PC-3 (cell line): ENCODE measurements at regions of chr15 and their contacts with region 1.

Region 1: DNA sequence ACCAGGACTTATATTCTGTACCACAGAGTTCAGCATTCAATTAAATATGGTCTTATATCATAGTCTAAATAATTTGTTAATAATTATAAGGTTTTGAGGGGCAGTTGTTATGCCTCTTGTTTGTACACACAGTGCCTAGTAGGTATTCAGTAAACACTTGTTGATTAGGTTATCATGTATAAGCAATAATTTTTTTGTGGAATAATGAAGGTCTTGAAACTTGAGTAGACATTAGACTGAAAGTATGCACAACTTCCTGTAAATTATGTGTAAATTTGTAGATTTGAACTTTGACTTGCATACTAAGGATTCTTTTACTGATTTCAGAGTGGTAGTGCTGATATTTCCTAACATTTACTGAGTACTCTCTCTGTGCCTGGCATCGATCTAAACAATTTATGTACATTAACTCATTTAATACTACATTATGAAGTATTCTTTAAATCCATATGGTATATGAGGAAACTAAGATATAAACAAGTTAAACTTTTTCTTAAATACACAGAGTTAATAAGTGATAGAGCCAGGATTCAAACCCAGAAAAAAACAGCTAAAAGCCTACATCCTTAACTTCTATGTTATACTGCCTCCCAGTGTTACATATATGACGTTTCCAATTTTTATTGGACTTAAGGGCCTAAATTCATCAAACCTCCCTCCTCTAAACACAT is 65.1 kb downstream of the GLCE start:
- DNase-seq: peak; percentile 52
- ATAC-seq: peak; percentile 40; the same call in 1 of the 2 replicates
- H3K4me3 ChIP-seq: no peak overlapping the region
- H3K27ac ChIP-seq: no peak overlapping the region
- H3K4me1 ChIP-seq: peaks cover 4% of the 10 kb centered on the region; the same call in 1 of the 2 replicates
- H3K27me3 ChIP-seq: no peaks in the 10 kb centered on the region
- CTCF ChIP-seq: peak; percentile 58

Region 2: DNA sequence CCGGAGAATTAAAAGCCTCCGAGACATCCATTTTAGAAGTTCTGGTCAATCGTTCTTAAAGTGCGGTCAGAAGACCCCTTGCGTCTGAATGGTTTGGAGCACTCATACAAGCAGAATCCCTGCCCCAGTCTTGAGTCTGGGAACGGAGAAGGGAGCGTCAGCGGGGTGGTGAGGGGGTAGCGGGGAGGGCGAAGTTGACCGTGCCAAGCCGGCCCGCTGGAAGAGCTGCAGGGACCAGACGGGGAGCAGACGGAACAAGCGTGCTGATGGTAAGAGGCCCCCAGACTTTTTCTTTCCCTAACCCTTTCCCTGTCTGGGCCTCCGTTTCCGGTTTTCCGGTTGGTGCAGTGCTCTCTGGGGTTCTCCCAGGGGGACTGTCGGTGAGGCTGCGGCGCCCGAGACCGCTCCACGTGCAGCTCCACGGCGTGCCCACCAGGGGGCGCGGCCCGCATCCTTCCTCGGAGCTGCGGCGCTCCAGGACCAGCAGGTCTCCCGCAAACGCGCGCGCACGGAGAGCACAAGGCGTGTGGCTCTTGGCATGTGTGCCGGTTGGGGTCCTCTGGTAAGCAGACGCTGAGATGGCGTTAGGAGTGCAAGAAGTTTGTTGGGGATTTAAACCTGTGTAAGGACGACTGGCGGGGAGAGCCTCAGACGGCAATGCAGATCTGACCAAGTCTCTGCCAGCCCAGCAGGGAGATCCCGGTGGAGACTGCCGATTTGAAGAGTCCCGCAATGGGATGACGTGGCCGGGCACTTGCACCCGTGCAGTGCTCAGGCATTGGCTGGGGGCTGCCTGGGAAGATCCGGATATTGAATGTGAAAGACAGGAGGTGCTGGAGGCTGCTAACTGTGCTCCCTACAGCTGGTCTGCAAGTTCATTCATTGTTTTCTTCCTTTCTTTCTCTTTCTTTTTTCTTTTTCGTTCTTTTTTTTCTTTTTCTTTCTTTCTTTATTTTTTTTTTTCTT is 665.9 kb before region 1 on chr15:
- CTCF ChIA-PET with region 1: interaction called, 15 read pairs
- POLR2A ChIA-PET with region 1: no interaction called
- intact Hi-C with region 1: no loop called
- DNase-seq: peak; percentile 72
- ATAC-seq: peak; percentile 93
- H3K4me3 ChIP-seq: peak overlapping the region; percentile 70
- H3K27ac ChIP-seq: no peak overlapping the region
- H3K4me1 ChIP-seq: no peaks in the 10 kb centered on the region
- H3K27me3 ChIP-seq: no peaks in the 10 kb centered on the region
- CTCF ChIP-seq: peak; percentile 91

Region 3: DNA sequence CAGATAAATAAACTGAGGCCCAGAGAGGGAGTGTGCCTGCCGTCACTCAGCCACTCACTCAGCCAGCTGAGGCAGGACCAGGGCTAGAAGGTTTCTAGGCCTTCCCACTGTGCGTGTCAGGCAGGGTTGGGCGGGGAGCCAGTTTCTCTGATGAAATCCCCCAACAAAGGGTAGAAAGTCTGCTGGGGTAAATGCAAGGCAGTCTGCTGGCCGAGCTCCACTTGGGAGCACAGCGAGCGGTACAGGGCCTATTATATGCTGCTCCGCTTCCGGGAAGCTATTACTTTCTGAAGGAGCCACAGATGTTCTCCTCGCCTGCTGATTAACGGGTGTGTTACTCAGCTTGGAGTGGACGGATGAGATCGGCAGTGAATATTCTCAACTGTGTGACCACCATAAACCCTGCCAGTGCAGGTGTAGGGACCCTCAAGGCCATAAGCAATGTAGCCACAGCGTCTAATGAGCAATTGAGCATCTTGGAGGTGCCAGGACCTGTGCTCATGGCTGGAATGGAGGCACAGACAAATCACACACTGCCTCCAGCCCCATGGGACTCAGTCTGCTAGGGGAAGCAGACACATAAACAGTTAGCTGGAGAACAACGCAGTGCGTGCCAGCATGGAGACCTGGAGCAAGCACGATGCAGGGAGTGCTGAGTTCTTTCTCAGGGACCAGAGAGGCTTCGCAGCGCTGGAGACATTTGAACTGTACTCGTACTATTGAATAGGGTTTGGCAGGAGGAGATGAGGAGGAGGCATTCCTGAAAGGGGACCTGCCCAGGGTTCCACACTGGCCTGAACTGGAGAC is 604.6 kb before region 1 on chr15:
- CTCF ChIA-PET with region 1: no interaction called
- POLR2A ChIA-PET with region 1: no interaction called
- intact Hi-C with region 1: no loop called
- DNase-seq: no peak
- ATAC-seq: no peak
- H3K4me3 ChIP-seq: no peak overlapping the region
- H3K27ac ChIP-seq: no peak overlapping the region
- H3K4me1 ChIP-seq: no peaks in the 10 kb centered on the region
- H3K27me3 ChIP-seq: no peaks in the 10 kb centered on the region
- CTCF ChIP-seq: no peak

Region 4: GRCh38 chr15:69185706-69186105 is 39.8 kb before region 1 on chr15:
- CTCF ChIA-PET with region 1: no interaction called
- POLR2A ChIA-PET with region 1: no interaction called
- intact Hi-C with region 1: no loop called
- DNase-seq: no peak
- ATAC-seq: no peak
- H3K4me3 ChIP-seq: no peak overlapping the region
- H3K27ac ChIP-seq: no peak overlapping the region
- H3K4me1 ChIP-seq: no peaks in the 10 kb centered on the region
- H3K27me3 ChIP-seq: no peaks in the 10 kb centered on the region
- CTCF ChIP-seq: no peak

Region 5: GRCh38 chr15:69403594-69403993 is 178.1 kb after region 1 on chr15:
- CTCF ChIA-PET with region 1: no interaction called
- POLR2A ChIA-PET with region 1: no interaction called
- intact Hi-C with region 1: no loop called
- DNase-seq: peak; percentile 41
- ATAC-seq: peak; percentile 61
- H3K4me3 ChIP-seq: no peak overlapping the region
- H3K27ac ChIP-seq: no peak overlapping the region
- H3K4me1 ChIP-seq: no peaks in the 10 kb centered on the region
- H3K27me3 ChIP-seq: no peaks in the 10 kb centered on the region
- CTCF ChIP-seq: no peak

Region 6: GRCh38 chr15:69604072-69604411 is 378.6 kb after region 1 on chr15:
- CTCF ChIA-PET with region 1: no interaction called
- POLR2A ChIA-PET with region 1: no interaction called
- intact Hi-C with region 1: no loop called
- DNase-seq: peak; percentile 70
- ATAC-seq: peak; percentile 81
- H3K4me3 ChIP-seq: no peak overlapping the region
- H3K27ac ChIP-seq: peak overlapping the region; percentile 7; the same call in 1 of the 2 replicates
- H3K4me1 ChIP-seq: peaks cover 7% of the 10 kb centered on the region
- H3K27me3 ChIP-seq: no peaks in the 10 kb centered on the region
- CTCF ChIP-seq: peak; percentile 62